Left cardiac atrium (tissue), 4 donors: ENCODE measurements at regions of chr7 and their contacts with region 1.

Region 1: DNA sequence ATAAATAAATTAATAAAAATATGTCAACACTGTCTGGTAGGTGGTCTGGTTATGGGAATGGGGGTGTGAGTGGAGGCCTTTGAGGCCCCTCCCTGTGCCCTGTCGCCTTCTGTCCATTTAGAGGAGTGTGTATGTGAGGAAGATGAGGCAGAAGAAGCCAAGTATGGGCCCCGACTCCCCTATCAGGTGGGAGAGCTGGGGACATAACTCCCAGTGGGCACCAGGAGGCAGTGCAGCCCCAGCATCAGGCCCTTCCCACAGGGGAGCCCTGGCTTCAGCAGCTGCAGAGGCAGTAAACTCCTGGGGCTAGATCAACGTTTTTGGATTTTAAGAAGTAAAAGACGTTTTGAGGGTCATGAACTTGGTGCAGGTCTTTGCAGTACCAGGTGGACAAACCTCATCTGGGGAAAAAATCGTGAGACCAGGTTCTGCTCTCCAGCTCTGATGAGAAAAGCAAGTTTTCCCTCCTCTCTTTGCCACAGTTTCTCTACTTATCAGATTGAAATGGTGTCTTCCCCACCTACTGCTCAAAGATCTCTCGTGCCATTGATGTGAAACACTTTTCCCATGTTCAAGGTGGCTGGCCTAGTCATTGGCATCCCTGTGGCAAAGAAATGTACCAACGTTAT is 167.8 kb upstream of the EEPD1 start:
- DNase-seq: peak; percentile 85
- ATAC-seq: peak; percentile 97 to 99

Region 2: GRCh38 chr7:35537067-35538023 is 447.9 kb before region 1 on chr7:
- intact Hi-C with region 1: no loop called
- DNase-seq: peak; percentile 84
- ATAC-seq: peak; percentile 96 to 98

Region 3: DNA sequence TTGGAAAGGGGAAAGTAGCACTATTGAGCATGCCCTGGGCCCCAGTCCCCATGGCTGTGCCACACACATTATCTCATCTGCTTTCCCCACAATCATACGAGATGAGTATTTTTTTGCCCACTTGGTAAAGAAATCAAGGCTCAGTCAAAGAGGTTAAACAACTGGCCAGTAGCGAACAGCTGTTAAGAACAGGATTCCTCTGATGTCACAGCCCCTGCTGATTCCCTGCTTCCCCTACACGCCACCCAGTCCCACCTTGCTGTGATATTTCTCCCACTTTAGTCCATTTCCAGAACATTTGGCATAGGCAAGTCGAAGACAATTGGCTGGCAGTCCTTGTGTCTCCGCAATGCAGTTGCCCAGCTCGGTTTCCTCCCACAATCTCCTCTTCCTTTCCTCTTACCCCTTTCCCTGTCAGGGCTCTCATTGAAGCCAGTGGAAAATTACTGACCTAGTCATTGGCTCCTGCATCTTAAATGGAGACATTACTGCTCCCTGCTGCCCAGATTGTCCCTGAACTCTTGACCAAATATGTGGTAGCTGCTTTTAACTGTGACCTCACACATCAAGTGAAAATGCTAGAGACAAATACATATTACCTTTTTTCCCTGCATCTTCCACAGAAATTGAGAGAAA is 111.3 kb after region 1 on chr7:
- intact Hi-C with region 1: loop called in 1 of 2 experiments (anchors 10 kb)
- DNase-seq: no peak
- ATAC-seq: peak; percentile 55 to 66

Region 4: GRCh38 chr7:36291387-36292316 is 306.4 kb after region 1 on chr7:
- intact Hi-C with region 1: loop called (anchors 1 kb)
- DNase-seq: peak; percentile 89
- ATAC-seq: peak; percentile 95 to 96

Region 5: GRCh38 chr7:36315309-36316133 is 330.3 kb after region 1 on chr7:
- intact Hi-C with region 1: loop called in 1 of 2 experiments (anchors 5 kb)
- DNase-seq: no peak
- ATAC-seq: no peak